Gastrocnemius medialis (tissue), 4 donors: ENCODE measurements at regions of chr10 and their contacts with region 1.

Region 1: GRCh38 chr10:60816628-60817397 is 38.5 kb downstream of the CDK1 start:
- DNase-seq: peak; percentile 25 to 39
- ATAC-seq: peak; percentile 93 to 94
- H3K4me3 ChIP-seq: peak overlapping the region in 1 of 4 donors; percentile 19
- H3K27ac ChIP-seq: peak overlapping the region in 3 of 4 donors; percentile 14 to 27 (median 19)
- H3K4me1 ChIP-seq: peaks cover 22 to 26% of the 10 kb centered on the region in 2 donors
- H3K27me3 ChIP-seq: no peaks in the 10 kb centered on the region
- CTCF ChIP-seq: peak; percentile 72 to 86 (median 82)
- POLR2A ChIP-seq: no peak

Region 2: DNA sequence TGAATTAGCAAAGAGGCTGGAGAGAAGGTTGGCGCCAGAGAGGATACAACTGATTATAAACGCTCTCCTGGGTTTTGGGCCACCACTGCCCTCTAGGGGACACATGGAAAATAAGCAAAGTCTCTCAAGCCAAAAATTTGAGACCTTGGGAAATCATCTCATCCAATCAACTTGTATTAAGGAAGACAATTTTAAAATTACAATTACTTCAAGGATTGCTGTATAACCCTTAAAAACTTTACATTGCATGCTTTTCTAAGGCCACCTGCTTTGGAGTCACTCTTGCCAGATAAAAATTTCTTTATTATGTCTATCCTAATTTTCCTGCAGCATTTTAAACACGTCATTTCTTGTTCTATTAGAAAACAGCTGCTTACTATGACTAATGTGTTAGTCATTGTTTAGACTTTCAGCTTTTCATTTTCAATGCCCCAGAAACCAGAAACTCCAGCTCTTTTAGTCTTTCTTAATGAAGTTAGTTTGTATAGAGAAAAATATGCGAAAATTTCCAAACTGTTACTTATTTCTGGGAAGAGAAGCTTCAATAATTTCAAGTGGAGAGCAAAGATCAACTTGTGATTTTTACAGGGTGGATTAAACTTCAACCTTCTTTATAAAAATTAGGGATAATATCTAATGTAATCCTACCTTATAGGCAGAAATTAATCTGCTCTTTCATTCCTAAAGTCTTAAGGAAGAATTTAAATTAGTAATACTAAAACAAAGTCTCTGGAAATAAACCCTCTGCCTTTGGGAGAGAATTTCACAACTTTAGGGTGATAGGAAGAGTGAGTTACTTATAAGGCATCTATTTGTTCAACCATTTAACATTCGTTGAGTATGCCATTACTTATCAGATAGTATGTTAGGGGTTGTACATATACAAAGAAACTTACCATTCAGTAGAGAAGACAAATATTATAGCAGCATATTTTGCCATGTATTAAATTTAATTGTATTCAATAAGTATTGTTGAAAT is 147.7 kb after region 1 on chr10:
- in situ Hi-C with region 1: loop called (anchors 5 kb)
- intact Hi-C with region 1: loop called (anchors 1 kb)
- DNase-seq: peak; percentile 57 to 65
- ATAC-seq: peak; percentile 92
- H3K4me3 ChIP-seq: no peak overlapping the region
- H3K27ac ChIP-seq: peak overlapping the region in 3 of 4 donors; percentile 49 to 60 (median 53)
- H3K4me1 ChIP-seq: peaks cover 6 to 14% of the 10 kb centered on the region in 2 donors
- H3K27me3 ChIP-seq: no peaks in the 10 kb centered on the region
- CTCF ChIP-seq: peak; percentile 78 to 86 (median 80)
- POLR2A ChIP-seq: no peak

Region 3: GRCh38 chr10:61140765-61141392 is 324.1 kb after region 1 on chr10:
- in situ Hi-C with region 1: loop called in 3 of 4 experiments (anchors 5 to 25 kb)
- intact Hi-C with region 1: no loop called
- DNase-seq: no peak
- ATAC-seq: peak; percentile 69 to 81
- H3K4me3 ChIP-seq: no peak overlapping the region
- H3K27ac ChIP-seq: no peak overlapping the region
- H3K4me1 ChIP-seq: peaks cover 0 to 12% of the 10 kb centered on the region in 2 donors
- H3K27me3 ChIP-seq: no peaks in the 10 kb centered on the region
- CTCF ChIP-seq: peak; percentile 69 to 79 (median 73)
- POLR2A ChIP-seq: no peak

Region 4: GRCh38 chr10:61733358-61733940 is 916.6 kb after region 1 on chr10:
- in situ Hi-C with region 1: no loop called
- intact Hi-C with region 1: loop called (anchors 5 kb)
- DNase-seq: no peak
- ATAC-seq: no peak
- H3K4me3 ChIP-seq: no peak overlapping the region
- H3K27ac ChIP-seq: no peak overlapping the region
- H3K4me1 ChIP-seq: no peaks in the 10 kb centered on the region
- H3K27me3 ChIP-seq: no peaks in the 10 kb centered on the region
- CTCF ChIP-seq: peak in 2 of 5 experiments; percentile 38 to 49
- POLR2A ChIP-seq: no peak

Region 5: GRCh38 chr10:62244780-62245467 is 1428.1 kb after region 1 on chr10:
- in situ Hi-C with region 1: loop called in 1 of 4 experiments (anchors 25 kb)
- intact Hi-C with region 1: loop called (anchors 10 kb)
- DNase-seq: peak; percentile 29 to 41
- ATAC-seq: peak; percentile 82 to 83
- H3K4me3 ChIP-seq: no peak overlapping the region
- H3K27ac ChIP-seq: no peak overlapping the region
- H3K4me1 ChIP-seq: peaks cover 6 to 12% of the 10 kb centered on the region in 2 donors
- H3K27me3 ChIP-seq: no peaks in the 10 kb centered on the region
- CTCF ChIP-seq: peak; percentile 75 to 88 (median 83)
- POLR2A ChIP-seq: no peak

Region 6: GRCh38 chr10:62268399-62269114 is 1451.7 kb after region 1 on chr10 and contains the start of gene RTKN2:
- in situ Hi-C with region 1: loop called in 1 of 4 experiments (anchors 25 kb)
- intact Hi-C with region 1: no loop called
- DNase-seq: peak; percentile 48 to 60
- ATAC-seq: peak; percentile 74 to 93
- H3K4me3 ChIP-seq: peak within 1 kb of the TSS; percentile 66 to 96 (median 80)
- H3K27ac ChIP-seq: no peak within 1 kb of the TSS
- H3K4me1 ChIP-seq: peaks cover 11 to 15% of the 10 kb centered on the region in 2 donors
- H3K27me3 ChIP-seq: peaks cover 10 to 17% (median 15%) of the 10 kb centered on the region in 3 donors
- CTCF ChIP-seq: no peak
- POLR2A ChIP-seq: no peak
- total RNA-seq, gene RTKN2: not detected